GM12878 (cell line): ENCODE measurements at regions of chr18 and their contacts with region 1.

Region 1: GRCh38 chr18:74869904-74870863 is 272.5 kb downstream of the ZNF407 start:
- DNase-seq: peak; percentile 71
- ATAC-seq: peak; percentile 94
- H3K4me3 ChIP-seq: no peak overlapping the region
- H3K27ac ChIP-seq: peak overlapping the region; percentile 64; the same call in 1 of the 2 replicates
- H3K4me1 ChIP-seq: peaks cover 18% of the 10 kb centered on the region
- H3K27me3 ChIP-seq: no peaks in the 10 kb centered on the region
- CTCF ChIP-seq: no peak
- EP300 ChIP-seq: 0 out of 4 replicates have a peak, but pooled peaks of 1 of the 2 experiments have one; percentile 6
- POLR2A ChIP-seq: no peak
- RAD21 ChIP-seq: no peak

Region 2: GRCh38 chr18:74652392-74652988 is 217.7 kb before region 1 on chr18:
- CTCF ChIA-PET with region 1: interaction called, 4 read pairs
- POLR2A ChIA-PET with region 1: no interaction called
- RAD21 ChIA-PET with region 1: no interaction called
- SMC1A ChIA-PET with region 1: interaction called, 5 read pairs
- in situ Hi-C with region 1: no loop called
- intact Hi-C with region 1: loop called (anchors 10 kb)
- DNase-seq: no peak
- ATAC-seq: peak; percentile 85
- H3K4me3 ChIP-seq: no peak overlapping the region
- H3K27ac ChIP-seq: no peak overlapping the region
- H3K4me1 ChIP-seq: no peaks in the 10 kb centered on the region
- H3K27me3 ChIP-seq: no peaks in the 10 kb centered on the region
- CTCF ChIP-seq: peak; percentile 30 to 62 (median 58); a peak in 4 of 6 replicates
- EP300 ChIP-seq: no peak
- POLR2A ChIP-seq: no peak
- RAD21 ChIP-seq: peak; percentile 78

Region 3: DNA sequence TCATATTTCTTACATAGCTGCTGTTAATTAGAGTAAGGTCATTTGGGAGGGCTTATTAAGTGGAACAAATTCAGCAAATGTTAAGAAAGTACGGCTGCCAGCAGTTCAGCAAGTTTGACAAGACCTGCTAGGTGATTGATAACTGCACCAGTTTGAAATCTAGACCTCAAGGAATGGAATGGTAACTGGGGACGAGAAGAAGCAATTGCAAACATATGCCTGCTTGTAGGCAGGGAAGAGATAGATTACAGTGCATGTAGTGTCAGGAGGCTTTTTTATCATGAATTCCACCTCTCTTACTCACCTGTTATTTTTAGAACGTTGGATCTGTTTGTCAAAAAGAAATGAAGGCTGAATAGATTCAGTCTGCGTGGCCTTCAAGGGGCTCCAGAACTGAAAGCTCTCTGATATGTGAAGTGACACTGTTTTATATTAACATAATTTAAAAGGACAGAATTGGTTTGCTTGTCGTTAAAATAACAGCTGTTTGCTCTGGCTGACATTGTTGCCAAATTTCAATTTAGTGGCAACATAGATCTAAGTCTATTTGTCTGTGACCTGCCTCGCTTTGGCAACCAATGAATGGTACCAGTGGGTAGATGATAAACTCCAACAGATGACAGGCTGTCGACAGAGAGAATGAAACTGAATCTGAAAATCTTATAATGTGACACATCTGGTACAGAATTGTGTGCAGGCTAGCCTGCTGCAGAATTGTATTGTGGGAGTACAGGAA is 73.2 kb before region 1 on chr18:
- CTCF ChIA-PET with region 1: interaction called, 4 read pairs
- POLR2A ChIA-PET with region 1: no interaction called
- RAD21 ChIA-PET with region 1: interaction called, 7 read pairs
- SMC1A ChIA-PET with region 1: interaction called, 26 read pairs
- in situ Hi-C with region 1: no loop called
- intact Hi-C with region 1: no loop called
- DNase-seq: peak; percentile 40
- ATAC-seq: peak; percentile 99
- H3K4me3 ChIP-seq: peak overlapping the region; percentile 51
- H3K27ac ChIP-seq: 0 out of 2 replicates have a peak overlapping the region, but pooled peaks have one; percentile 17
- H3K4me1 ChIP-seq: peaks cover 16% of the 10 kb centered on the region; the same call in 1 of the 2 replicates
- H3K27me3 ChIP-seq: no peaks in the 10 kb centered on the region
- CTCF ChIP-seq: no peak
- EP300 ChIP-seq: no peak; a peak in 1 of 4 replicates
- POLR2A ChIP-seq: no peak
- RAD21 ChIP-seq: no peak

Region 4: GRCh38 chr18:74806700-74807416 is 63.3 kb before region 1 on chr18:
- CTCF ChIA-PET with region 1: interaction called, 3 read pairs
- POLR2A ChIA-PET with region 1: no interaction called
- RAD21 ChIA-PET with region 1: interaction called, 16 read pairs
- SMC1A ChIA-PET with region 1: interaction called, 12 read pairs
- in situ Hi-C with region 1: no loop called
- intact Hi-C with region 1: loop called (anchors 5 kb)
- DNase-seq: peak; percentile 73
- ATAC-seq: peak; percentile 98
- H3K4me3 ChIP-seq: peak overlapping the region; percentile 35; the same call in 1 of the 2 replicates
- H3K27ac ChIP-seq: peak overlapping the region; percentile 82
- H3K4me1 ChIP-seq: peaks cover 19% of the 10 kb centered on the region
- H3K27me3 ChIP-seq: no peaks in the 10 kb centered on the region
- CTCF ChIP-seq: no peak
- EP300 ChIP-seq: peak in 1 of 2 experiments; percentile 77; a peak in 2 of 4 replicates
- POLR2A ChIP-seq: no peak
- RAD21 ChIP-seq: no peak

Region 5: GRCh38 chr18:74880706-74881278 is 10.6 kb after region 1 on chr18:
- CTCF ChIA-PET with region 1: no interaction called
- POLR2A ChIA-PET with region 1: no interaction called
- RAD21 ChIA-PET with region 1: no interaction called
- SMC1A ChIA-PET with region 1: interaction called, 10 read pairs
- in situ Hi-C with region 1: no loop called
- intact Hi-C with region 1: no loop called
- DNase-seq: no peak
- ATAC-seq: no peak
- H3K4me3 ChIP-seq: no peak overlapping the region
- H3K27ac ChIP-seq: no peak overlapping the region
- H3K4me1 ChIP-seq: no peaks in the 10 kb centered on the region
- H3K27me3 ChIP-seq: no peaks in the 10 kb centered on the region
- CTCF ChIP-seq: no peak
- EP300 ChIP-seq: no peak
- POLR2A ChIP-seq: no peak
- RAD21 ChIP-seq: no peak

Region 6: GRCh38 chr18:74896390-74896991 is 26.3 kb after region 1 on chr18:
- CTCF ChIA-PET with region 1: interaction called, 3 read pairs
- POLR2A ChIA-PET with region 1: no interaction called
- RAD21 ChIA-PET with region 1: interaction called, 4 read pairs
- SMC1A ChIA-PET with region 1: interaction called, 10 read pairs
- in situ Hi-C with region 1: no loop called
- intact Hi-C with region 1: no loop called
- DNase-seq: no peak
- ATAC-seq: peak; percentile 92
- H3K4me3 ChIP-seq: no peak overlapping the region
- H3K27ac ChIP-seq: no peak overlapping the region
- H3K4me1 ChIP-seq: no peaks in the 10 kb centered on the region
- H3K27me3 ChIP-seq: no peaks in the 10 kb centered on the region
- CTCF ChIP-seq: peak; percentile 60 to 71 (median 63)
- EP300 ChIP-seq: no peak
- POLR2A ChIP-seq: no peak
- RAD21 ChIP-seq: peak; percentile 76

Region 7: DNA sequence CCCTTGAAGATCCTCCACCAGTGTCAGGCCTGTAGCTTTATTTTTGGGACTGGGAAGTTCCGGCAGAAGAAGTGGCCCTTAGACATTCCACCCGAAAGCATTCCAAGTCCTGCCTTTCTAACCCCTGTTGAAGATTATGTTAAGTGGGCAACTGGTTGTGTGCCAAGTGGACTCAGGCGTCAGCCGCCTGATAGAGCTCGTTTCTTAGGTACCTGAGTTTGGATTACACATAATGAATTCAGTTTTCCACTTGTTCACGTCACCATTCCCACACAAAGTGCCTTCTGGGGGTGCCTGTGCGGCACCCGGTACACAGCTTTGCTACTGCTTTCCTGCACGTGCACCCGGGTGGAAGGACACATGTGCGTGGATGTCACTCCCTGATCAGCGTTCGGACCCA is 182.3 kb after region 1 on chr18:
- CTCF ChIA-PET with region 1: no interaction called
- POLR2A ChIA-PET with region 1: no interaction called
- RAD21 ChIA-PET with region 1: no interaction called
- SMC1A ChIA-PET with region 1: no interaction called
- in situ Hi-C with region 1: no loop called
- intact Hi-C with region 1: no loop called
- DNase-seq: no peak
- ATAC-seq: no peak
- H3K4me3 ChIP-seq: no peak overlapping the region
- H3K27ac ChIP-seq: no peak overlapping the region
- H3K4me1 ChIP-seq: no peaks in the 10 kb centered on the region
- H3K27me3 ChIP-seq: no peaks in the 10 kb centered on the region
- CTCF ChIP-seq: no peak
- EP300 ChIP-seq: no peak
- POLR2A ChIP-seq: no peak
- RAD21 ChIP-seq: no peak

Region 8: GRCh38 chr18:75429975-75430374 is 559.8 kb after region 1 on chr18:
- CTCF ChIA-PET with region 1: no interaction called
- POLR2A ChIA-PET with region 1: no interaction called
- RAD21 ChIA-PET with region 1: no interaction called
- SMC1A ChIA-PET with region 1: no interaction called
- in situ Hi-C with region 1: no loop called
- intact Hi-C with region 1: no loop called
- DNase-seq: no peak
- ATAC-seq: no peak
- H3K4me3 ChIP-seq: no peak overlapping the region
- H3K27ac ChIP-seq: no peak overlapping the region
- H3K4me1 ChIP-seq: no peaks in the 10 kb centered on the region
- H3K27me3 ChIP-seq: no peaks in the 10 kb centered on the region; a peak in 2 of 4 replicates
- CTCF ChIP-seq: no peak
- EP300 ChIP-seq: no peak
- POLR2A ChIP-seq: no peak
- RAD21 ChIP-seq: no peak